ENCODE measurements at regions of chrX and their contacts with region 1.

Region 1: DNA sequence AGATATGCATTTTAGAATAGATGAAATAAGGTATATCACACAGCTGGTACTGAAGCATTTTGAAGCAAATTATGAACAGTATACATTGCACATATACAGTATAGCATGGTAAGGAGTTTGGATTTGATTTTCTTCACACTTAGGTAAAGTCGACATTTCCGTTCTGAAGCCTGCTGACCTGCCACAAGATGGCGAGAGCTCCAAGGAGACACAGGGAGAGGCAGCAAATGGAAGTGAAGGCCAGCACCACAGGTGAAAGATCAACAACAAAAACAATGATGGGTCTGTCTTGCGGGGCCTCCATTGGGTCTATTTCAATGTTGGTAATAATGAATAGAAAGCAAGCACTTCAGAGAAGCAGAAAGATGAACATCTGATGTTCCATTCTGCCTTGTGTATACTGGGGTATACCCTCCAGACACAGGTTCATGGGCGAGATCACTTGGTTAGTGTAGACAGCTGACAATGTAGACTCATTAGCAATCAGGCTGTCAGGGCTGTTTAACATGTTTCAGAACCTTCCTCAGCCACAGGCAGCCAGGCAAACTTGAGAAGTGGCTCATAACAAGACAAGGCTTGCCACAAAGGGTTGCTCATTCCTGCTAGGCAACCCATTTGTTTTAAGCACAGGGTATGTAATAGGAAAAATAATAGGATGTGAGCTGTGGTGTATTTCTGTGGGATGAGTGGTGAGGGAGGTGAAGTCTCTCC is 21.4 kb upstream of the NOX1 start:
- ATAC-seq: peak in 6 of 8 experiments; percentile 16 to 61 (median 46)
- H3K4me3 ChIP-seq: no peak overlapping the region
- H3K27ac ChIP-seq: no peak overlapping the region
- H3K4me1 ChIP-seq: no peaks in the 10 kb centered on the region

Region 2: DNA sequence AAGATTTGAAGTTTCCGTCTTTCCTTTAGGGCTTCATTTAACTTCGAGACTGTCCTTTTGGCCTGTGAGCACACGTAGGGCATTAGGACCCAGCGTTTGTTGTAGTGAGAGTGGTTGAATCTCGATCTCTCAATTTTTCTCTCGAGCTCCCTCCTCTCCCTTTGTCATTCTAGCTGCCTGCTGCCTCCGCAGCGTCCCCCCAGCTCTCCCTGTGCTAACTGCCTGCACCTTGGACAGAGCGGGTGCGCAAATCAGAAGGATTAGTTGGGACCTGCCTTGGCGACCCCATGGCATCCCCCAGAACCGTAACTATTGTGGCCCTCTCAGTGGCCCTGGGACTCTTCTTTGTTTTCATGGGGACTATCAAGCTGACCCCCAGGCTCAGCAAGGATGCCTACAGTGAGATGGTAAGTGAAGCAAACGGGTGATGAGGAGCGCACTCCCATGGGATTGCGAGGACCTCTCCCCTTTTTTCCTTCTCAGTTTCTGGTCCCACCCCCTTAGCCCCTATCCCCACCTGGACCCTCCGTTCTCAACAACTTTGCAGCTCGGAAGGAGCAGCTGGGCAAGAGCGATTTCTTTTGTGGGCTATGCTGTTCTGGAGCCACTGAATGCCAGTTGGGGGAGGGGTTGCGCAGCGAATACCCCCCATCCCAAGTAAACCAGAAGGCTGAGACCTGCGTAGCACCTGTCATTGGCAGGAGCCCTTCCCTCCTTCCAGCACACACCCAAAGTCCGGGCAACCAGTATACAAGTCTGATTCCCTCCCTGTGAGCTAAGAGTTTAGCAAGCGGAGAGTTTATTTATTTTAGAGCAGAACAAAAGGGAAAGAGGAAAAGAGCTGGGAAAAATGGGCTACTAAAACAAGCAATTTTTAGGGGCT is 183.4 kb after region 1 on chrX and contains the start of gene TMEM35A:
- in situ Hi-C with region 1: no loop called
- ATAC-seq: peak; percentile 51 to 93 (median 88)
- H3K4me3 ChIP-seq: peak within 1 kb of the TSS; percentile 50 to 84 (median 72)
- H3K27ac ChIP-seq: peak within 1 kb of the TSS in 1 of 2 donors; percentile 54
- H3K4me1 ChIP-seq: peaks cover 0 to 4% of the 10 kb centered on the region in 2 donors
- total RNA-seq, gene TMEM35A: 0.45 to 58.0 (median 24.6) TPM in 7 of 8 experiments, not detected in the other

Region 3: GRCh38 chrX:101091817-101092216 is 196.3 kb after region 1 on chrX:
- in situ Hi-C with region 1: no loop called
- ATAC-seq: no peak
- H3K4me3 ChIP-seq: no peak overlapping the region
- H3K27ac ChIP-seq: no peak overlapping the region
- H3K4me1 ChIP-seq: no peaks in the 10 kb centered on the region

Region 4: DNA sequence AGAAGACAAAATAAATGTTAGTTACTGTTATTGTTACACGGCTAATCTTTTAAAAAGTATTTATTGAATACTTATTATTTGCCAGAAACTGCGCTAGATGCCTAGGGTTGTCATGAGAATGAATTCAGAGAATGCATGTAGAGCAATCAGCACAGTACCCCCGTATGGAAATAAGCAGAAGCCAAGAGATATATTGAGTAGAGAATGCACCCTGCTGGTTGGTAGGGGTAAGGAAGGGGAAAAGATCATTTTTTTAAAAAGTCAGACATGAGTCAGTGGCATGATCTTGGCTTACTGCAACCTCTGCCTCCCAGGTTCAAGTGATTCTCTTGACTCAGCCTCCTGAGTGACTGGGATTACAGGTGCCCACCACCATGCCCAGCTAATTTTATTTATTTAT is 311.0 kb after region 1 on chrX:
- in situ Hi-C with region 1: loop called in 1 of 9 experiments (anchors 25 kb)
- ATAC-seq: peak in 3 of 8 experiments; percentile 74 to 78 (median 75)
- H3K4me3 ChIP-seq: no peak overlapping the region
- H3K27ac ChIP-seq: no peak overlapping the region
- H3K4me1 ChIP-seq: no peaks in the 10 kb centered on the region

Measured in motor neuron (in vitro differentiated cells).